Transverse colon (tissue), 4 donors: ENCODE measurements at regions of chr16 and their contacts with region 1.

Region 1: GRCh38 chr16:12057266-12057665 is 80.7 kb downstream of the SNX29 start:
- DNase-seq: peak; percentile 26
- H3K4me3 ChIP-seq: no peak overlapping the region
- H3K27ac ChIP-seq: peak overlapping the region in 2 of 4 donors; percentile 4 to 6
- H3K4me1 ChIP-seq: peaks cover 0 to under 1% (median 0%) of the 10 kb centered on the region in 4 donors
- H3K27me3 ChIP-seq: no peaks in the 10 kb centered on the region
- CTCF ChIP-seq: no peak
- EP300 ChIP-seq: no peak
- POLR2A ChIP-seq: no peak

Region 2: DNA sequence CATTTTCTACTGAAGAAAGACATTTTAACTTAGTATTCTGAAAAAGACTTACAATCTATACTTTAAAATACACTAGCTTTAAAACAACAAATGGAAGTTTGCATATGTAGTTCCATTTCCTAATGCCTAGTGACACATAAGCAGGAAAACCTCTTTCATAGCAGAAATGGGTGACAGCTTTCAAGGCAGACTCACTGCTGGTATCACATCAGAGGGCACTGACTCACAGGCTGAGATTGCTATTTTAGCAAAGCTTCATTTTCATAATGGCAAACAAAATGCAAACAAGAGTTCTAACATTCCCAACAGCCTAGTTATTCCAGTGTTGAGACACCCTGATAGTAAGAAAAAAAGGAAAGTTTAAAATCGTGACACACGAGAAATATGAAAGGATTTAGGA is 160.5 kb before region 1 on chr16:
- in situ Hi-C with region 1: no loop called
- intact Hi-C with region 1: no loop called
- DNase-seq: no peak
- H3K4me3 ChIP-seq: no peak overlapping the region
- H3K27ac ChIP-seq: no peak overlapping the region
- H3K4me1 ChIP-seq: peaks cover 0 to 13% (median 0%) of the 10 kb centered on the region in 4 donors
- H3K27me3 ChIP-seq: no peaks in the 10 kb centered on the region
- CTCF ChIP-seq: no peak
- EP300 ChIP-seq: no peak
- POLR2A ChIP-seq: no peak

Region 3: GRCh38 chr16:11964761-11965551 is 92.3 kb before region 1 on chr16 and contains the start of gene TNFRSF17:
- in situ Hi-C with region 1: loop called in 3 of 4 experiments (anchors 10 to 25 kb)
- intact Hi-C with region 1: no loop called
- DNase-seq: peak; percentile 13
- H3K4me3 ChIP-seq: no peak within 1 kb of the TSS
- H3K27ac ChIP-seq: peak within 1 kb of the TSS in 2 of 4 donors; percentile 35 to 53
- H3K4me1 ChIP-seq: no peaks in the 10 kb centered on the region
- H3K27me3 ChIP-seq: no peaks in the 10 kb centered on the region
- CTCF ChIP-seq: no peak
- EP300 ChIP-seq: no peak
- POLR2A ChIP-seq: no peak
- total RNA-seq, gene TNFRSF17: 1.2 to 6.0 TPM in 2 of 4 donors, not detected in the others